ENCODE measurements at regions of chr11 and their contacts with region 1.

Region 1: GRCh38 chr11:123152956-123153355 is 42.1 kb downstream of the CLMP start:
- DNase-seq: no peak
- CTCF ChIP-seq: no peak

Region 2: DNA sequence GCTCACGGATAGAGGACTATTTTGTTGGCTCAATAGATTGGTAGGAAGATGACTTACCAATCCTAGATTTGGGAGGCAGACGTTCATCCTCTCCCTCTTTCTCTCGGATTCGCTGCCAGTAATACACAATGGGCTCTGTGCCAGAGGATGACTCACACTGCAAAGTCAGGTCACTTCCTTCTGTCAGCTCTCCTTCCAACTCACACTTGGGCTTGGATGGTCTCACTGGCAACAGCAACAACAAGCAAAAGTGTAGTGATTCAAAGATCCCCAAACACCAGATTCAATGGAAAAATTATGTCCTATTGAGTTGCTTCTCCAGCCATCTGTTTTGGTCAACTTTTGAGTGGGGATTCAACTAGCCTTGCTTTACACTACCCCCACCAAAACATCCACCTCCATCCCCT is 69.3 kb before region 1 on chr11:
- CTCF ChIA-PET with region 1: no interaction called
- POLR2A ChIA-PET with region 1: no interaction called
- DNase-seq: no peak
- CTCF ChIP-seq: no peak

Region 3: DNA sequence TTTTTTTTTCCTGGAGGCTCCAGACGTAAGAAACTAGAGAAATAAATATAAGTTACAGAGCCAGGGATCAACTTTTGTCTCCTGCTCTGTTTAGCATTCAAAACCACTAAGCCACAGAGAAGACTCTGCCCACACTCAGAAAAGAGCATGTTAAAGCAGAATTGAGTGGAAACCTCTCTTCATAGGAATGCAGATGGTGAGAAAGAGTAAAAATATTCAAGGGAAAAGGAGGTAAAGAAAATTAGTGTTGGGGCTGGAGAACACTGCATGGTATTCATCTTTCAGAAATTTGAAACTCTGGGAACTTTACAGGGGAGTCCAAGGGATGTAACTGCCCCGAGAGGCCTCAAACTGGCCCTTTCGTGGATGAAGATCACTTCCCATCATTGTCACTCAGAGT is 23.0 kb before region 1 on chr11:
- CTCF ChIA-PET with region 1: no interaction called
- POLR2A ChIA-PET with region 1: no interaction called
- DNase-seq: no peak
- CTCF ChIP-seq: no peak

Region 4: GRCh38 chr11:123166071-123166559 is 13.2 kb after region 1 on chr11:
- CTCF ChIA-PET with region 1: interaction called, 23 read pairs
- POLR2A ChIA-PET with region 1: interaction called, 3 read pairs
- DNase-seq: no peak
- CTCF ChIP-seq: peak; percentile 56

Measured in GM10248 (cell line).